A549 (cell line): ENCODE measurements at regions of chr20 and their contacts with region 1.

Region 1: DNA sequence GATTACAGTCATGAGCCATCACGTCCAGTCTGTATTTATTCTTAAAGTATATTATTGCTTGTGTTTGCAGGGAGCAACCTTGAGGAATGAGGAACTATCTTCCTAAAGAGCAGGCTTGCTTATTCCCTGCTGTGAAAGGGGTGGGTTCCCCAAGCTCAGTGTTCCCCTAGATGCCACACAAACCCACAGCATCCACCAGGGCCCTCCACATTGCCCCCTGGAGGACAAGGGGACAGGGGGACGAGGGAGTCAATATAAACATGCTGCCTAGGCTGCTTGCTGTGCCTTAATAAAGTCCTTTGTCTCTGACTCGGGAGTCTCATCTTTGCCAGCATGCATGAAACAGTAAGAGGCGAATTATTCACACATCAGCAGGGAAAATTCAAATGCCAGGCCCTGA is 8.0 kb upstream of the IDH3B start:
- DNase-seq: peak in 1 of 2 experiments; percentile 32
- ATAC-seq: peak; percentile 15 to 69; a peak in 3 of 6 replicates
- H3K4me3 ChIP-seq: no peak overlapping the region
- H3K27ac ChIP-seq: no peak overlapping the region
- H3K4me1 ChIP-seq: no peaks in the 10 kb centered on the region
- CTCF ChIP-seq: 0 out of 3 replicates have a peak, but pooled peaks have one; percentile 16
- EP300 ChIP-seq: no peak
- POLR2A ChIP-seq: no peak
- RAD21 ChIP-seq: no peak

Region 2: GRCh38 chr20:2643708-2644107 is 28.3 kb before region 1 on chr20:
- CTCF ChIA-PET with region 1: interaction called, 44 read pairs
- POLR2A ChIA-PET with region 1: no interaction called
- DNase-seq: no peak
- ATAC-seq: no peak
- H3K4me3 ChIP-seq: no peak overlapping the region
- H3K27ac ChIP-seq: no peak overlapping the region
- H3K4me1 ChIP-seq: no peaks in the 10 kb centered on the region
- CTCF ChIP-seq: no peak
- EP300 ChIP-seq: no peak
- POLR2A ChIP-seq: no peak
- RAD21 ChIP-seq: no peak

Region 3: DNA sequence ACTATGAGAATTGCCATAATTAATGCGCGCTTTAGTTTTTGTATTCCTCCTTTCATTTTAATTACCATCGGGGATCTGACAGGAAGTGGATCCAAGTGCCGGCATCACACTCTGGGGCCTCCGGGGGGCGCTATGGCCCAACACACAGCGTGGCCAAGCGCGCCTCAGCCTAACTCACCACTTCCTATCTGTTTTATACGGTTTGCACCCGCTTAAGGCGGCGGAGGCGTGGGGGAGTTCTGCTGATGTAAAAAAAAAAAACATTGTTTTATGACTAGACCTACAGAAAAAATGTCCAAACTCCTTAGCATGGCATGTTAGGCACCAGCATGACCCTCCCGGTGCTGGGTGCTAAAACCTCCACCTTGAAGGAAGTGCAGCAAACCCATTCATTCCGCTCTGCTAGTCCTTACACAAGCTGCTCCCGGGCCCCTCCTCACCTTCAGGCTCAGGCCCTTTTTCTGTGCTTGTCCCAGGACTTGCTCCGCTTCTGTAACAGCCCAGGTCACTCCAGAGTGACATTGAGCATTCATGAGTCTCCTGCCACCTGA is 16.1 kb after region 1 on chr20:
- CTCF ChIA-PET with region 1: interaction called, 60 read pairs
- POLR2A ChIA-PET with region 1: interaction called, 6 read pairs
- DNase-seq: peak in 1 of 2 experiments; percentile 59
- ATAC-seq: peak in 1 of 2 experiments; percentile 65; a peak in 3 of 6 replicates
- H3K4me3 ChIP-seq: no peak overlapping the region
- H3K27ac ChIP-seq: no peak overlapping the region
- H3K4me1 ChIP-seq: 0 out of 3 replicates have a peak, but pooled peaks cover 3% of the 10 kb centered on the region
- CTCF ChIP-seq: peak; percentile 51
- EP300 ChIP-seq: no peak
- POLR2A ChIP-seq: no peak
- RAD21 ChIP-seq: peak; percentile 61 to 71